ENCODE measurements at regions of chr10 and their contacts with region 1.

Region 1: GRCh38 chr10:24920907-24921881 is 31.2 kb downstream of the PRTFDC1 start:
- DNase-seq: peak; percentile 83
- H3K4me3 Mint-ChIP-seq: no peak overlapping the region
- H3K27ac Mint-ChIP-seq: peak overlapping the region; percentile 54
- H3K4me1 Mint-ChIP-seq: peaks cover 19% of the 10 kb centered on the region
- H3K27me3 Mint-ChIP-seq: no peaks in the 10 kb centered on the region

Region 2: DNA sequence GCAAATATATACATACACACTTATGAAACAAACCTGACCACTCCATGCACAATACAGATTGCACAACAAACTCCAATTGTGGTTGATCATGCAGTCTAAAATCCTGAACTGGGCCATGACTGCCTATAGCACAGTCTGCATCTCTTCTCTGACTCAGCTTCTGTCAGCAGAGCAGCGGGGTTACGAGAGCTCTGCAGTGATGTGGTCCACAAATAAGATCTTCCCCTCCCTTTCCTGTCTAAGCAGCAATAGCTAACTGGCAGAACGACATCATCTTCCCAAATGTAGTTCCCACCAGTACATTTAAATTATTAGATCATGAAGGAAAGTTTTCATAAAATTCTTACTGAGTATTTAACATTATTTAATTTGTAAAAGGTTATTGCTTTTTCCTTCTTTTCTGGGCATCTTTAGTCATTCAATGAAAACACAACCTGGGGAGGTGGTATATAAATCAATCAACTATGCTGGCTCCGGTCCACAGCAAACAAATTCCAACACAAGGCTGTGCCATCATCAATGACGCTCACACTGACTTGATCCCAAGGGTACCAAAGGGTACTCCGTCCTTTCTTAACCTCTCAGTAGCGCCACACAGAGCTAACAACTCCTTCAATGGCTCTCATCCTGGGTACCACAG is 214.6 kb before region 1 on chr10:
- CTCF ChIA-PET with region 1: no interaction called
- intact Hi-C with region 1: loop called (anchors 1 kb)
- DNase-seq: peak; percentile 58
- H3K4me3 Mint-ChIP-seq: no peak overlapping the region
- H3K27ac Mint-ChIP-seq: no peak overlapping the region
- H3K4me1 Mint-ChIP-seq: peaks cover 5% of the 10 kb centered on the region
- H3K27me3 Mint-ChIP-seq: peaks cover 2% of the 10 kb centered on the region

Region 3: GRCh38 chr10:24887855-24888231 is 33.4 kb before region 1 on chr10:
- CTCF ChIA-PET with region 1: no interaction called
- intact Hi-C with region 1: loop called (anchors 1 kb)
- DNase-seq: no peak
- H3K4me3 Mint-ChIP-seq: no peak overlapping the region
- H3K27ac Mint-ChIP-seq: no peak overlapping the region
- H3K4me1 Mint-ChIP-seq: peaks cover 41% of the 10 kb centered on the region
- H3K27me3 Mint-ChIP-seq: no peaks in the 10 kb centered on the region

Region 4: GRCh38 chr10:24901686-24902399 is 19.4 kb before region 1 on chr10:
- CTCF ChIA-PET with region 1: no interaction called
- intact Hi-C with region 1: loop called (anchors 1 kb)
- DNase-seq: peak; percentile 37
- H3K4me3 Mint-ChIP-seq: no peak overlapping the region
- H3K27ac Mint-ChIP-seq: no peak overlapping the region
- H3K4me1 Mint-ChIP-seq: peaks cover 33% of the 10 kb centered on the region
- H3K27me3 Mint-ChIP-seq: peaks cover 2% of the 10 kb centered on the region

Region 5: GRCh38 chr10:24947304-24948097 is 26.3 kb after region 1 on chr10:
- CTCF ChIA-PET with region 1: no interaction called
- intact Hi-C with region 1: loop called (anchors 2 kb)
- DNase-seq: no peak
- H3K4me3 Mint-ChIP-seq: no peak overlapping the region
- H3K27ac Mint-ChIP-seq: no peak overlapping the region
- H3K4me1 Mint-ChIP-seq: peaks cover 14% of the 10 kb centered on the region
- H3K27me3 Mint-ChIP-seq: no peaks in the 10 kb centered on the region